A673 (cell line): ENCODE measurements at regions of chr19 and their contacts with region 1.

Region 1: GRCh38 chr19:54115109-54116063 is at the starts of genes PRPF31 and TFPT:
- DNase-seq: peak; percentile 99
- H3K4me3 ChIP-seq: peak within 1 kb of the TSS; percentile 70
- H3K27ac ChIP-seq: peak within 1 kb of the TSS; percentile 93
- H3K4me1 ChIP-seq: peaks cover 7% of the 10 kb centered on the region
- H3K27me3 ChIP-seq: no peaks in the 10 kb centered on the region
- CTCF ChIP-seq: no peak
- total RNA-seq, gene PRPF31: 109 and 115 TPM in 2 replicates
- total RNA-seq, gene TFPT: 31.1 and 31.4 TPM in 2 replicates

Region 2: DNA sequence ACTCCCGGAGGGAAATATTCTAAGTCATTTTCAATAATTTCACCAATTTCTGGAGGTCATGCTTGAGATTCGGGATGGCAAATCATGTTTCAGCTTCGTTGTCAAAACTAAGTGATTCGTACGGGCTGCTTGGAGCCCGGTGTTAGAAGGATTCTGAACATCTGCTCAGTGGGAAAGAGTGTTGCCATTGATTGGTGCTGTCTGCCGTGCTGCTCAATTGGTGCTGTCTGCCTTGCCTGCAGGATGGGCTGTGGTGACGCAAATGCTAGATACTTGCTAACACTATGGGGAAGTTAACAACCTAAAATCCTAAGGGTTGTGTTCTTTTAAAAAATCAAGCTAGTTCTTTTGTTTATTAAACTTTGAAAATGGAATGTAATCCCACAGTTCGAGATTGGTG is 169.9 kb before region 1 on chr19:
- CTCF ChIA-PET with region 1: no interaction called
- POLR2A ChIA-PET with region 1: no interaction called
- intact Hi-C with region 1: no loop called
- DNase-seq: no peak
- H3K4me3 ChIP-seq: no peak overlapping the region
- H3K27ac ChIP-seq: no peak overlapping the region
- H3K4me1 ChIP-seq: no peaks in the 10 kb centered on the region
- H3K27me3 ChIP-seq: peaks cover 9% of the 10 kb centered on the region
- CTCF ChIP-seq: no peak

Region 3: DNA sequence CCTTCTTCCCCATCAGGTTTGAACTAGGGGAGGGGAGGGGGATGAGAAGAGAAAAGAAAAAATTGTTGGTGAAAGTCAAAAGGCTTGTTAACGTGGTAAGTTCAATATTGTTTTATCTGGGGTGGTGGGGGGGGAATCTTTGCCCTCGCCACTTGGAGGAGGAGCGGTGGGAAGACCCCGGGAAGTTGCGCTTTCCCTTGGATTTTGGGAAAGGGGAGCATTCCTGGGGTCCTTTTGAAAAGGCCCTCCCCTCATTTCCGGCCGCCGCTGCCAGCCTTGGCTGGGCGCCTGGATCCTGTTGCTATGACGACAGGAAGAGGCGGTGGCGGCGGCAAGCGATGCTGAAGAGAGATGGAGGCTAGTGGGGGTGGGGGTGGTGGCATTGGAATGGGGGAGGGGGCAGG is 157.2 kb before region 1 on chr19:
- CTCF ChIA-PET with region 1: no interaction called
- POLR2A ChIA-PET with region 1: no interaction called
- intact Hi-C with region 1: no loop called
- DNase-seq: peak; percentile 78
- H3K4me3 ChIP-seq: no peak overlapping the region
- H3K27ac ChIP-seq: no peak overlapping the region
- H3K4me1 ChIP-seq: peaks cover 21% of the 10 kb centered on the region
- H3K27me3 ChIP-seq: peaks cover 14% of the 10 kb centered on the region
- CTCF ChIP-seq: no peak

Region 4: GRCh38 chr19:54102421-54103169 is 12.8 kb before region 1 on chr19 and contains the start of gene NDUFA3:
- CTCF ChIA-PET with region 1: no interaction called
- POLR2A ChIA-PET with region 1: interaction called, 14 read pairs
- intact Hi-C with region 1: no loop called
- DNase-seq: peak; percentile 99
- H3K4me3 ChIP-seq: peak within 1 kb of the TSS; percentile 75
- H3K27ac ChIP-seq: peak within 1 kb of the TSS; percentile 77
- H3K4me1 ChIP-seq: no peaks in the 10 kb centered on the region
- H3K27me3 ChIP-seq: no peaks in the 10 kb centered on the region
- CTCF ChIP-seq: no peak
- total RNA-seq, gene NDUFA3: 144 and 148 TPM in 2 replicates